Mammary epithelial cell (primary cell): ENCODE measurements at regions of chr1 and their contacts with region 1.

Region 1: GRCh38 chr1:76154206-76154956 is 79.8 kb downstream of the ST6GALNAC3 start:
- DNase-seq: peak; percentile 55
- H3K4me3 ChIP-seq: peak overlapping the region in 2 of 3 experiments; percentile 33 to 41
- H3K27ac ChIP-seq: no peak overlapping the region
- H3K4me1 ChIP-seq: peaks cover 4% of the 10 kb centered on the region
- H3K27me3 ChIP-seq: no peaks in the 10 kb centered on the region
- CTCF ChIP-seq: peak; percentile 97 to 98

Region 2: GRCh38 chr1:75980972-75981897 is 173.1 kb before region 1 on chr1:
- CTCF ChIA-PET with region 1: no interaction called
- dilution Hi-C with region 1: no loop called
- in situ Hi-C with region 1: no loop called
- intact Hi-C with region 1: no loop called
- DNase-seq: no peak
- H3K4me3 ChIP-seq: no peak overlapping the region
- H3K27ac ChIP-seq: no peak overlapping the region
- H3K4me1 ChIP-seq: no peaks in the 10 kb centered on the region
- H3K27me3 ChIP-seq: peaks cover 2% of the 10 kb centered on the region
- CTCF ChIP-seq: no peak

Region 3: DNA sequence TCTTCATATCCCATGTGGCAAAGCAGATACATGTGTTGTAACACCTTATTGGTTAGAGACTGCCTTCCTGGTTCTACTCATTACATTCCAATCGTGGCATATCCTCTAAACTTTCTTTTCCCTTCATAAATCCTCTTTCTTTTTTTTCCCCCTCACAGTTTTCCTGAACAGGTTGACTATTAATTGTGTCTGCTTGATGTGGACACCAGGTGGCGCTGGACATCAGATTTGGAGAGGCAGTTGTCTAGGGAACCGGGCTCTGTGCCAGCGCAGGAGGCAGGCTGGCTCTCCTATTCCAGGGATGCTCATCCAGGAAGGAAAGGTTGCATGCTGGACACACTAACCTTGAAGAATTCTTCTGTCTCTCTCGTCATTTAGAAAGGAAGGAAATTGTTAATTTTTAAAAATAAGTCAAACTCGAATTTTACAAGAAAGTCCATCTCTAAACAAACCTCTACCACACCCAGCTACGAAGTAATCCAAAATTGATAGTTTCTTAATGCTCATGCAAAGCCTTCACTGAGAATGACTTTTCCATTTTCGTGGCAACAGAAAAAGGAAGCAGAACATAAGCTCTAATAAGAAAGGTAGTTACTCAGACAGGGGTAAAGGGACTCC is 162.8 kb before region 1 on chr1:
- CTCF ChIA-PET with region 1: no interaction called
- dilution Hi-C with region 1: no loop called
- in situ Hi-C with region 1: no loop called
- intact Hi-C with region 1: loop called (anchors 1 kb)
- DNase-seq: peak; percentile 65
- H3K4me3 ChIP-seq: no peak overlapping the region
- H3K27ac ChIP-seq: no peak overlapping the region
- H3K4me1 ChIP-seq: no peaks in the 10 kb centered on the region
- H3K27me3 ChIP-seq: peaks cover 12% of the 10 kb centered on the region
- CTCF ChIP-seq: peak; percentile 82 to 89

Region 4: GRCh38 chr1:76317299-76317900 is 163.0 kb after region 1 on chr1:
- CTCF ChIA-PET with region 1: no interaction called
- dilution Hi-C with region 1: no loop called
- in situ Hi-C with region 1: no loop called
- intact Hi-C with region 1: no loop called
- DNase-seq: no peak
- H3K4me3 ChIP-seq: no peak overlapping the region
- H3K27ac ChIP-seq: no peak overlapping the region
- H3K4me1 ChIP-seq: no peaks in the 10 kb centered on the region
- H3K27me3 ChIP-seq: no peaks in the 10 kb centered on the region
- CTCF ChIP-seq: no peak

Region 5: DNA sequence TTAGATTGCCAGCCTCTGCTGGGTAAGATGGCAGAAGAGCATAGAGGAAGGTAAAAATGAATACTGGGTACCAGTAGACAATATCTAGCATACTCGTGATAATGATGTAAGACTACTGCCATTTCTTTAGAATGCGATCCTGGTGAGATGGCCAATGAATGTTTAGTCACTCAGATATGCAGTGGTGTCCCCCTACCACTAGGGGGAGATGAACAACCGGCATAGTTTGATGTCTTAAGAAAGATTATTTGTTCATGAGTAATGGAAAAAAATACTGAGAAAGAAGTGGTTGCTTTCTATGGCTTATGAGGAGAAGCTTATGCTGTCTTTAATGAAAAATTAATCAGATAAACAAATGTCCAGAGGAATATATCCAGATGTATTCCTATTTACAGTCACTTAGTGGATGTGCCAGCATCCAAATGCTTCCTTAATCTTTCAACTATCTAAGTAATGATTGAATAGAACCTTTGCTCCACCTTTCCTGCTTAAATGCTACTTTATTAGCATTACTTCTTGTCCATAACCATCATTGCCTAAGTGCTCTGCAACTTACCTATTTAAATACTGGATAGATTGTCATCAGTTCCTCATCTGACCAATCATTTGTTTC is 176.7 kb after region 1 on chr1:
- CTCF ChIA-PET with region 1: no interaction called
- dilution Hi-C with region 1: no loop called
- in situ Hi-C with region 1: no loop called
- intact Hi-C with region 1: loop called (anchors 1 kb)
- DNase-seq: peak; percentile 46
- H3K4me3 ChIP-seq: no peak overlapping the region
- H3K27ac ChIP-seq: no peak overlapping the region
- H3K4me1 ChIP-seq: no peaks in the 10 kb centered on the region
- H3K27me3 ChIP-seq: no peaks in the 10 kb centered on the region
- CTCF ChIP-seq: peak; percentile 86 to 97

Region 6: DNA sequence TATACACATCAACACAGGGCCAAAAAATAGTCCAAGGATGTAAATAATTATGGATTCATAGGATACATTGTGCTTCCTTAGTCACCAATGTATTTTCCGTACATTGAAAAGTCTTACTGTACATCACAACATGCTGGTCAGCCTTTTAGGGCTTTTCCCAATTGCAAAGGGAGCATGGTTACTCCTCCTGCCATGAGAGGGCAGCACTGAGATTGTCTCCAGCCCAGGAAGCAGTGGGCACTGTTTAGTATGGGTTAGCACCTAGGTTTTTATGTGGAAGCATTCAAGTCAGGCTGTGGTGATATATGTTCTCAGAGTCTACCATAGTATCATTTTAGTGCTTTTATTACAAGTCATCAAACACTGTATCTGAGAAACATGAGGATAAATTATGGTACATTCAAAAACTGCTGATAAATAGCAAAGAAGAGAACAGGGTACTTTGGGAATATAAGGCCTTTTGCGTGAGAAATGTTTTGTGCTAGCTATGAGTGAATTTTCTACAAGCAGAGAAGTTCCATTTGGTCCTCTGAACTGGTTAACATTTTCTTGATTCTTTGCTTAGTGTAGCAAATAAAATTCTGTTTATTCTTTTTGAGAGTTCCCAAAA is 746.9 kb after region 1 on chr1:
- CTCF ChIA-PET with region 1: no interaction called
- dilution Hi-C with region 1: no loop called
- in situ Hi-C with region 1: no loop called
- intact Hi-C with region 1: loop called (anchors 1 kb)
- DNase-seq: peak; percentile 60
- H3K4me3 ChIP-seq: no peak overlapping the region
- H3K27ac ChIP-seq: no peak overlapping the region
- H3K4me1 ChIP-seq: no peaks in the 10 kb centered on the region
- H3K27me3 ChIP-seq: no peaks in the 10 kb centered on the region
- CTCF ChIP-seq: peak; percentile 88 to 95

Region 7: GRCh38 chr1:77143529-77144121 is 989.2 kb after region 1 on chr1:
- CTCF ChIA-PET with region 1: no interaction called
- dilution Hi-C with region 1: no loop called
- in situ Hi-C with region 1: loop called (anchors 10 to 25 kb)
- intact Hi-C with region 1: loop called (anchors 1 kb)
- DNase-seq: no peak
- H3K4me3 ChIP-seq: no peak overlapping the region
- H3K27ac ChIP-seq: no peak overlapping the region
- H3K4me1 ChIP-seq: no peaks in the 10 kb centered on the region
- H3K27me3 ChIP-seq: no peaks in the 10 kb centered on the region
- CTCF ChIP-seq: peak; percentile 27 to 40